Dorsolateral prefrontal cortex (tissue), 120 donors: ENCODE measurements at regions of chr21 and their contacts with region 1.

Region 1: GRCh38 chr21:28745131-28746016 is 247.3 kb downstream of the LTN1 start:
- DNase-seq: peak; percentile 51 to 84 (median 72)
- H3K4me3 ChIP-seq: peak overlapping the region; percentile 33 to 73 (median 58)
- H3K27ac ChIP-seq: peak overlapping the region in 50 of 59 donors; percentile 5 to 87 (median 56)
- H3K27me3 ChIP-seq: no peaks in the 10 kb centered on the region
- CTCF ChIP-seq: peak; percentile 74 to 99 (median 92)

Region 2: DNA sequence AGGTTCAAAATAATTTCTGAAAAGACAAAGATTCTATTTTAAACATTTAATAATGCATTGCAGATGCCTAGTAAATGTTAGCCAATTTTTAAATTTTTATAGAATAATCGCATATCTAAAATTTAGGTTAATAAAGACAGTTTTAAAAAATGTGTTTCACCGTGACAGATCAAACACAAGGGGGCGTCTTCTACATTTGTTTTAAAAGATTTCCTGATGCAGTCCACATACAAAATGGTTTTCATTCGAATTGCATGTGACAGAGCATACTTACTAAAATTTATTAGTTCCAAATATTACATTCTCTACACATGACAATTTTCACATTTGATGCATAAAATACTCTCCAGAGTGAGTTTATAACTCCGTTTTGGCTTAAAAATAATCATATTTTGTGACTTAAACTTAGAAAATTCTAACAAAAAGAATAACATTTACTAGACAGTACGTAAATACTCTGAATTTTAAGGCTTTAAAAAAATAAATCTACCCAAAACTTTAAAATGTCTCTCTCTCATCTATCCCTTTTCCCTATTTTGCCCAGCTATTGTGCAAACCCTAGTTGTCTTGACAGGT is 1975.7 kb before region 1 on chr21:
- intact Hi-C with region 1: loop called in 1 of 2 experiments (anchors 10 kb)
- DNase-seq: no peak
- H3K4me3 ChIP-seq: peak overlapping the region in 4 of 59 donors; percentile 0 to 14 (median 10)
- H3K27ac ChIP-seq: peak overlapping the region in 11 of 59 donors; percentile 6 to 74 (median 50)
- H3K27me3 ChIP-seq: no peaks in the 10 kb centered on the region
- CTCF ChIP-seq: peak; percentile 65 to 92 (median 80)

Region 3: GRCh38 chr21:26850108-26850643 is 1895.2 kb before region 1 on chr21:
- intact Hi-C with region 1: loop called (anchors 2 to 5 kb)
- DNase-seq: no peak
- H3K4me3 ChIP-seq: peak overlapping the region in 47 of 59 donors; percentile 2 to 53 (median 25)
- H3K27ac ChIP-seq: peak overlapping the region in 27 of 59 donors; percentile 9 to 100 (median 55)
- H3K27me3 ChIP-seq: no peaks in the 10 kb centered on the region
- CTCF ChIP-seq: peak; percentile 70 to 98 (median 85)

Region 4: GRCh38 chr21:28069450-28069923 is 675.9 kb before region 1 on chr21:
- intact Hi-C with region 1: loop called in 1 of 2 experiments (anchors 10 kb)
- DNase-seq: no peak
- H3K4me3 ChIP-seq: peak overlapping the region in 29 of 59 donors; percentile 0 to 55 (median 22)
- H3K27ac ChIP-seq: no peak overlapping the region
- H3K27me3 ChIP-seq: no peaks in the 10 kb centered on the region
- CTCF ChIP-seq: no peak

Region 5: GRCh38 chr21:28516991-28517592 is 228.3 kb before region 1 on chr21:
- intact Hi-C with region 1: loop called (anchors 5 to 10 kb)
- DNase-seq: peak in 8 of 10 donors; percentile 11 to 58 (median 40)
- H3K4me3 ChIP-seq: no peak overlapping the region
- H3K27ac ChIP-seq: no peak overlapping the region
- H3K27me3 ChIP-seq: no peaks in the 10 kb centered on the region
- CTCF ChIP-seq: peak in 54 of 56 donors; percentile 22 to 75 (median 59)

Region 6: GRCh38 chr21:28943631-28944030 is 198.3 kb after region 1 on chr21:
- intact Hi-C with region 1: loop called (anchors 5 to 10 kb)
- DNase-seq: no peak
- H3K4me3 ChIP-seq: peak overlapping the region in 1 of 59 donors; percentile 16
- H3K27ac ChIP-seq: peak overlapping the region in 55 of 59 donors; percentile 13 to 93 (median 82)
- H3K27me3 ChIP-seq: no peaks in the 10 kb centered on the region
- CTCF ChIP-seq: no peak